Thyroid gland (tissue), 4 donors: ENCODE measurements at regions of chr4 and their contacts with region 1.

Region 1: DNA sequence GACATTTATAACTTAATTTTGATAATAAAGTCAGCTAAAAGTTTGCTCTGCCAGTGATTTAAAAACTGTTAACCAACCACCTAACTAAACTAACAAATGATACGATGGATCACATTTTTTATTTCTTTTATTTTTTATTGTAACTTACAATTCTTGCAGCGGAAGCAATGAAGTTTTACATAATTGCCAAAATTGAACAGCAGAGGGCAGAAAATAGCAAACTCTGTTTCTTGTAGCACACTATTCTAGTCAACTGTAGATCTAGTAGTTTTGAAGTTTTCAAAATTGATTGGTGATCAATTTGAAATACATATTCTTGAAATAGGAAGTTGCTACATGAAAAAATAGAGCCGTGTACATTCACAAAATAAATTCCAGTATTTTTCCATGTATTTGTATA is 2.8 kb upstream of the GRIA2 start:
- DNase-seq: no peak
- H3K4me3 ChIP-seq: no peak overlapping the region
- H3K27ac ChIP-seq: no peak overlapping the region
- H3K4me1 ChIP-seq: peaks cover 0 to 14% of the 10 kb centered on the region in 2 donors
- H3K27me3 ChIP-seq: peaks cover 10% of the 10 kb centered on the region
- CTCF ChIP-seq: peak in 4 of 6 experiments; percentile 5 to 39 (median 26)
- POLR2A ChIP-seq: no peak

Region 2: GRCh38 chr4:157096439-157096838 is 121.3 kb before region 1 on chr4:
- intact Hi-C with region 1: no loop called
- DNase-seq: no peak
- H3K4me3 ChIP-seq: no peak overlapping the region
- H3K27ac ChIP-seq: no peak overlapping the region
- H3K4me1 ChIP-seq: no peaks in the 10 kb centered on the region
- H3K27me3 ChIP-seq: no peaks in the 10 kb centered on the region
- CTCF ChIP-seq: no peak
- POLR2A ChIP-seq: no peak

Region 3: GRCh38 chr4:157983300-157983699 is 765.6 kb after region 1 on chr4:
- intact Hi-C with region 1: loop called (anchors 5 kb)
- DNase-seq: no peak
- H3K4me3 ChIP-seq: no peak overlapping the region
- H3K27ac ChIP-seq: no peak overlapping the region
- H3K4me1 ChIP-seq: no peaks in the 10 kb centered on the region
- H3K27me3 ChIP-seq: no peaks in the 10 kb centered on the region
- CTCF ChIP-seq: no peak
- POLR2A ChIP-seq: no peak